ENCODE measurements at regions of chr12 and their contacts with region 1.

Region 1: DNA sequence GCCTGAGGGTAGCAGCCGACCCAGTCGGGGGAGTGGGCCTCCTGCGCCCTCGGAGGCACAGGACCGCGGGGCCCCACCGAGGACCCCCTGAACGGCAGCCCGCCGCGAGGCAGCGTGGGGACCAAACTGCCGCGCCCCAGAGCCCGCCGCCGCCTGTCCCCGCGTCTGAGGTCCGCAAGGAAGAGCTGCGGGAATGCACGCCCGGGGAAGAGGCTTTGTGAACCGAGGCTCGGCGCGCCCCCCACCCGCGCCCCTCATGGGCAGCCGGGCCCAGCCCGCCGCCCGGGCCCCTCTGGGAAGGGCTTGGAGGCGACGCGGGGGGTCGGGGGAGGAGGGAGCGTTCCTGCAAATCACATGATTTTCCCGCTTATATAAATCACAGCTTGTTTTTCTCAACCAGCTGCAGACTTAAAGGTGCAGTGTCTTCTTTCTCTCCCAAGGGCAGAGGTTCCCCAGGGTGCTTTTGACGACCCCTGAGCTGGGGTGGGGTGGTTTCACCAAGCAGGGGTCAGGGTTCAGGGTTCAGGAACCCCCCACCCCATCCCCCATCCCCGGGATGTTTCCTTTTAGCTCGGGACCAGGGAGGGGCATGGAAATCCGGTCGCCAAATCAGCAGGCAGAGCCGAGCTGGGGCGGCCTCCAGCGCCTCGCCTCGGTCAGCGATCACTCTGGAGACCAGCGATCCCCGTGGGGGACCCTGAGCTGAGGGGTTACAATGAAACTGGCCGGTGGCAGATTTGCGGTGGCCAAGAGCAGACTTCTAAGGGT is 44.7 kb upstream of the ATP23 start:
- DNase-seq: peak in 1 of 5 donors; percentile 19
- H3K4me3 ChIP-seq: peak overlapping the region; percentile 18
- H3K4me3 Mint-ChIP-seq: peak overlapping the region in 5 of 7 donors; percentile 33 to 72 (median 55)
- H3K27ac ChIP-seq: no peak overlapping the region
- H3K27ac Mint-ChIP-seq: peak overlapping the region in 6 of 8 donors; percentile 91 to 99 (median 99)
- H3K4me1 ChIP-seq: peaks cover 58% of the 10 kb centered on the region
- H3K4me1 Mint-ChIP-seq: peaks cover 40 to 62% (median 61%) of the 10 kb centered on the region in 3 donors
- H3K27me3 ChIP-seq: no peaks in the 10 kb centered on the region
- H3K27me3 Mint-ChIP-seq: peaks cover 0 to 7% of the 10 kb centered on the region in 2 donors

Region 2: DNA sequence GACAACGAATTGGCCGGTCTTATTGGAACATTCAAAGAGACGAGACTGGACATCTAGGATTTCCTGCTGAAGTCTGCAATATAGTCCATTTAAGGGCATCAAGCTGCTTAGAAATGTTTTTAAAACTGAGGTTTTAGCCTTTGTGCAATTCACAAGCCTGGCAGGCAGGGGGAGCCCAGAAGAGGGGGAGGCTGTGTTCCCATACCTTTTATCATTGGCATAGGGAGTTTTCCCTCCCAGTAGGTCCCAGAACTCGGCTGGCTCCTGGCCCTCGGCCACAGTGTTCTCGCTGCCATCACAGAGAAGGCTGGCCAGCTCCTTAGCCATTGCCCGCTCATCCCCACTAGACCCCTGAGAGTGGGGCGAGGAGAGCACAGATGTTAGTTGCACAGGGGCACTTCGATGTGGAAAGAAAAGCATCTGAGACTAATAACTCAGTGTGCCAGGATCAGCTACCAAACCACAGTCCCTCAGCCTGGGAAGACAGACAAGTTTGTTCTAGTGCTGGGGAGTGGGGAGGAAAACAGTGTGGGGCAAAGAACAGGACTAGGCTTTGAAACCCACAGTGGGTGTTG is 93.2 kb before region 1 on chr12:
- CTCF ChIA-PET with region 1: interaction called, 17 read pairs
- POLR2A ChIA-PET with region 1: no interaction called
- DNase-seq: peak in 1 of 5 donors; percentile 33
- H3K4me3 ChIP-seq: no peak overlapping the region
- H3K4me3 Mint-ChIP-seq: no peak overlapping the region
- H3K27ac ChIP-seq: no peak overlapping the region
- H3K27ac Mint-ChIP-seq: peak overlapping the region in 1 of 8 donors; percentile 66
- H3K4me1 ChIP-seq: no peaks in the 10 kb centered on the region
- H3K4me1 Mint-ChIP-seq: peaks cover 0 to 2% (median 0%) of the 10 kb centered on the region in 3 donors
- H3K27me3 ChIP-seq: no peaks in the 10 kb centered on the region
- H3K27me3 Mint-ChIP-seq: no peaks in the 10 kb centered on the region

Measured in CD8-positive, alpha-beta memory T cell (primary cell).